ENCODE measurements at regions of chr9 and their contacts with region 1.

Region 1: GRCh38 chr9:124940693-124941453 is at the start of gene GOLGA1:
- DNase-seq: peak; percentile 90 to 96 (median 94)
- ATAC-seq: peak; percentile 93
- H3K4me3 ChIP-seq: peak within 1 kb of the TSS; percentile 90
- H3K4me3 Mint-ChIP-seq: peak within 1 kb of the TSS; percentile 80 to 99 (median 92)
- H3K27ac ChIP-seq: peak within 1 kb of the TSS; percentile 95
- H3K27ac Mint-ChIP-seq: peak within 1 kb of the TSS; percentile 91 to 100 (median 98)
- H3K4me1 ChIP-seq: peaks cover 8% of the 10 kb centered on the region in 2 donors
- H3K4me1 Mint-ChIP-seq: peaks cover 16 to 44% (median 35%) of the 10 kb centered on the region in 7 donors
- H3K27me3 ChIP-seq: no peaks in the 10 kb centered on the region
- H3K27me3 Mint-ChIP-seq: no peaks in the 10 kb centered on the region
- total RNA-seq, gene GOLGA1: 19.6 to 37.8 (median 30.5) TPM

Region 2: GRCh38 chr9:124861342-124862229 is 79.3 kb before region 1 on chr9 and contains the starts of genes ARPC5L and RPL35:
- CTCF ChIA-PET with region 1: no interaction called
- POLR2A ChIA-PET with region 1: interaction called, 4 read pairs
- intact Hi-C with region 1: loop called (anchors 1 to 2 kb)
- DNase-seq: peak; percentile 91 to 97 (median 95)
- ATAC-seq: peak; percentile 98
- H3K4me3 ChIP-seq: peak within 1 kb of the TSS; percentile 88
- H3K4me3 Mint-ChIP-seq: peak within 1 kb of the TSS; percentile 89 to 99 (median 95)
- H3K27ac ChIP-seq: peak within 1 kb of the TSS; percentile 87
- H3K27ac Mint-ChIP-seq: peak within 1 kb of the TSS; percentile 91 to 99 (median 96)
- H3K4me1 ChIP-seq: peaks cover 7 to 16% of the 10 kb centered on the region in 2 donors
- H3K4me1 Mint-ChIP-seq: peaks cover 7 to 36% (median 29%) of the 10 kb centered on the region in 7 donors
- H3K27me3 ChIP-seq: no peaks in the 10 kb centered on the region
- H3K27me3 Mint-ChIP-seq: no peaks in the 10 kb centered on the region
- total RNA-seq, gene ARPC5L: 20.0 to 66.1 (median 33.1) TPM
- total RNA-seq, gene RPL35: 1,415 to 1,987 (median 1,778) TPM

Region 3: GRCh38 chr9:124960409-124960752 is 19.5 kb after region 1 on chr9:
- CTCF ChIA-PET with region 1: interaction called, 6 read pairs
- POLR2A ChIA-PET with region 1: interaction called, 55 read pairs
- intact Hi-C with region 1: loop called in 1 of 2 experiments (anchors 1 kb)
- DNase-seq: no peak
- ATAC-seq: no peak
- H3K4me3 ChIP-seq: no peak overlapping the region
- H3K4me3 Mint-ChIP-seq: no peak overlapping the region
- H3K27ac ChIP-seq: no peak overlapping the region
- H3K27ac Mint-ChIP-seq: no peak overlapping the region
- H3K4me1 ChIP-seq: peaks cover 12 to 21% of the 10 kb centered on the region in 2 donors
- H3K4me1 Mint-ChIP-seq: peaks cover 12 to 19% (median 19%) of the 10 kb centered on the region in 7 donors
- H3K27me3 ChIP-seq: no peaks in the 10 kb centered on the region
- H3K27me3 Mint-ChIP-seq: no peaks in the 10 kb centered on the region

Region 4: GRCh38 chr9:125143375-125144090 is 202.7 kb after region 1 on chr9 and contains the start of gene SCAI:
- CTCF ChIA-PET with region 1: no interaction called
- POLR2A ChIA-PET with region 1: interaction called, 8 read pairs
- intact Hi-C with region 1: loop called (anchors 1 kb)
- DNase-seq: peak; percentile 85 to 99 (median 98)
- ATAC-seq: peak; percentile 99
- H3K4me3 ChIP-seq: peak within 1 kb of the TSS; percentile 73
- H3K4me3 Mint-ChIP-seq: peak within 1 kb of the TSS; percentile 90 to 99 (median 97)
- H3K27ac ChIP-seq: peak within 1 kb of the TSS; percentile 70
- H3K27ac Mint-ChIP-seq: peak within 1 kb of the TSS; percentile 82 to 94 (median 89)
- H3K4me1 ChIP-seq: peaks cover 0 to 17% of the 10 kb centered on the region in 2 donors
- H3K4me1 Mint-ChIP-seq: peaks cover 21 to 52% (median 44%) of the 10 kb centered on the region in 7 donors
- H3K27me3 ChIP-seq: no peaks in the 10 kb centered on the region
- H3K27me3 Mint-ChIP-seq: no peaks in the 10 kb centered on the region
- total RNA-seq, gene SCAI: 12.8 to 23.9 (median 16.6) TPM

Region 5: DNA sequence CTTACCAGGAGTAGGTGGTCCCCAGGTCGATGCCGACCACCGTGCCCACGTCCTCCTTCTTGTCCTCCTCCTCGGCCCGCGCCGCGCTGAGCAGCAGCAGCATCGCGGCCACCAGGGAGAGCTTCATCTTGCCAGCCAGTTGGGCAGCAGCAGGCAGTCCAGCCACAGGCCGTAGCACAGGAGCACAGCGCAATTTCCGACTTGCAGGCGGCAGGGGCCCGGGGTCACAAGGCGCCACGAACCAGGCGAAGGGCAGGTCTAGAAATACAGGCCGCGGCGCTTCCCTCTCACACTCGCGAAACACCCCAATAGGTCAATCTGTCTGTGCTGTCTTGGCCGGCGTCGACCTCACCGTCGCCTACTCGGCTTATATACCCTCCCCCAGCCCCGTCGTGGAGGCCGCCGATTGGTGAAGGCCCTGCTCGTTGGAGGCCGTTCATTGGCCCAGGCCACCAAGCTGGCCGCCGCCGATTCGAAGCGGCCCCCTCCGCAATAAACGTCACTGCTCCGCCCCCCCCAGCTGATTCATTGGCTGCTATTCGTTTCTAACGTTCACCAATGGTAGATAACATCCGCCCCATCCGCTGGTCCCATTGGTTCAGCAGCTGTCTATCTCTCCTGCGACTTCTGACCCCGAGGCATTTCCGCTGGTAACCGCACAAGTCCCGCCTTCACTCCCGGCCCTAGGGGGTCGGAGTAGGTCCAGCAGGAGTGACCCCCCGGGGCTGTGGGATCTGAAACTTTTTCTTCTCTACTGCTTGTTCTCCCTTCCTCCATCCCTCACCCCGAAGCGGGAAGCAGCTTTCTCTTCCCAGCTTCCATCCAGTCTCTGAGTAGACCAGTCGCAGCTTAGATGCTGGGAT is 300.4 kb after region 1 on chr9 and contains the start of gene HSPA5:
- CTCF ChIA-PET with region 1: no interaction called
- POLR2A ChIA-PET with region 1: interaction called, 8 read pairs
- intact Hi-C with region 1: loop called (anchors 1 kb)
- DNase-seq: peak; percentile 94 to 100 (median 99)
- ATAC-seq: peak; percentile 94
- H3K4me3 ChIP-seq: peak within 1 kb of the TSS; percentile 85
- H3K4me3 Mint-ChIP-seq: peak within 1 kb of the TSS; percentile 94 to 99 (median 98)
- H3K27ac ChIP-seq: peak within 1 kb of the TSS; percentile 97
- H3K27ac Mint-ChIP-seq: peak within 1 kb of the TSS; percentile 96 to 100 (median 99)
- H3K4me1 ChIP-seq: peaks cover 39 to 48% of the 10 kb centered on the region in 2 donors
- H3K4me1 Mint-ChIP-seq: peaks cover 27 to 49% (median 45%) of the 10 kb centered on the region in 7 donors
- H3K27me3 ChIP-seq: no peaks in the 10 kb centered on the region
- H3K27me3 Mint-ChIP-seq: peaks cover 0 to 5% (median 0%) of the 10 kb centered on the region in 5 donors
- total RNA-seq, gene HSPA5: 127 to 248 (median 155) TPM

Measured in naive thymus-derived CD4-positive, alpha-beta T cell (primary cell).